Activated CD4-positive, alpha-beta memory T cell treated with anti-CD3 and anti-CD28 coated beads for 36 hours (primary cell): ENCODE measurements at regions of chr11 and their contacts with region 1.

Region 1: GRCh38 chr11:102476812-102477211 is 24.2 kb upstream of the TMEM123 start:
- DNase-seq: peak; percentile 58
- H3K4me3 Mint-ChIP-seq: peak overlapping the region; percentile 3
- H3K27ac Mint-ChIP-seq: peak overlapping the region; percentile 77
- H3K4me1 Mint-ChIP-seq: peaks cover 52% of the 10 kb centered on the region
- H3K27me3 Mint-ChIP-seq: no peaks in the 10 kb centered on the region

Region 2: GRCh38 chr11:102410382-102410784 is 66.4 kb before region 1 on chr11:
- CTCF ChIA-PET with region 1: no interaction called
- POLR2A ChIA-PET with region 1: no interaction called
- intact Hi-C with region 1: no loop called
- DNase-seq: no peak
- H3K4me3 Mint-ChIP-seq: no peak overlapping the region
- H3K27ac Mint-ChIP-seq: peak overlapping the region; percentile 5
- H3K4me1 Mint-ChIP-seq: peaks cover 80% of the 10 kb centered on the region
- H3K27me3 Mint-ChIP-seq: no peaks in the 10 kb centered on the region

Region 3: GRCh38 chr11:102488208-102488607 is 11.4 kb after region 1 on chr11:
- CTCF ChIA-PET with region 1: interaction called, 4 read pairs
- POLR2A ChIA-PET with region 1: no interaction called
- intact Hi-C with region 1: loop called (anchors 2 kb)
- DNase-seq: no peak
- H3K4me3 Mint-ChIP-seq: no peak overlapping the region
- H3K27ac Mint-ChIP-seq: peak overlapping the region; percentile 16
- H3K4me1 Mint-ChIP-seq: peaks cover 32% of the 10 kb centered on the region
- H3K27me3 Mint-ChIP-seq: no peaks in the 10 kb centered on the region

Region 4: DNA sequence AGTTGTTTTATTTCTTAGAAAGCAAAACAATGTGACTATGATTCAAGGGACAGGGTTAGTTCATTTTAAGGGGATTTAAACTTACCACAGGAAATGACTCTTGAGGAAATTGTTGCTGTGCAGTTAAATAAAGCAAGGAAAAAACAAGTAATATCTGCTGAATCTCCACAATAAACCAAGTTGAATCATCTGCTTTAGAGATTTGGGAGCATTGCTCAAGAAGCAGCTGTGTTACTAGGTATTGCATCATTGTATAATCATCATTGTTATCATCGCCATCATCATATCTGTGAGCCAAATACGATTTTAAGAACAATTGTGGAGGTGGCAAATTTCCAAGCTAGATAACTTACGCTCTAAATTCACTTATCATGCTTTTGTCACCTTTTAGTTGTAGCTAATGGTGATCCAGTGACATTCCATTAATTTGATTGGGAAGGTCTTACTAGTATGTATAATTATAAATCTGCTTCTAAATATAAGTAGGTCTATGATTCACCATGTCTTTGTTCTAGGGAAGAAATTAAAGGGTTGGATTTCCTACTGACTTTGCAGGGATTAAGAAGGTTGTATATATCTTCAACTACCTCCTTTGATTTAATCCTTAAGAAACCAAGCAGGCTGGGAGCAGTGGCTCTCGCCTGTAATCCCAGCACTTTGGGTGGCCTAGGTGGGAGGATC is 283.7 kb after region 1 on chr11:
- CTCF ChIA-PET with region 1: no interaction called
- POLR2A ChIA-PET with region 1: no interaction called
- intact Hi-C with region 1: no loop called
- DNase-seq: no peak
- H3K4me3 Mint-ChIP-seq: no peak overlapping the region
- H3K27ac Mint-ChIP-seq: no peak overlapping the region
- H3K4me1 Mint-ChIP-seq: peaks cover 2% of the 10 kb centered on the region
- H3K27me3 Mint-ChIP-seq: peaks cover 10% of the 10 kb centered on the region